ENCODE measurements at regions of chr19 and their contacts with region 1.

Region 1: GRCh38 chr19:18251587-18252369 is 22.5 kb downstream of the IQCN start:
- DNase-seq: peak; percentile 67 to 90 (median 83)
- ATAC-seq: peak; percentile 95
- H3K4me3 ChIP-seq: no peak overlapping the region
- H3K4me3 Mint-ChIP-seq: no peak overlapping the region
- H3K27ac ChIP-seq: no peak overlapping the region
- H3K27ac Mint-ChIP-seq: no peak overlapping the region
- H3K4me1 ChIP-seq: no peaks in the 10 kb centered on the region
- H3K4me1 Mint-ChIP-seq: peaks cover 1% of the 10 kb centered on the region
- H3K27me3 ChIP-seq: peaks cover 0 to 11% of the 10 kb centered on the region in 2 experiments
- H3K27me3 Mint-ChIP-seq: peaks cover 24% of the 10 kb centered on the region
- CTCF ChIP-seq: peak; percentile 83

Region 2: GRCh38 chr19:18007044-18007916 is 244.5 kb before region 1 on chr19:
- CTCF ChIA-PET with region 1: no interaction called
- POLR2A ChIA-PET with region 1: no interaction called
- intact Hi-C with region 1: loop called in 1 of 2 experiments (anchors 2 kb)
- DNase-seq: peak; percentile 66 to 90 (median 80)
- ATAC-seq: peak; percentile 57
- H3K4me3 ChIP-seq: peak overlapping the region; percentile 48 to 61
- H3K4me3 Mint-ChIP-seq: peak overlapping the region; percentile 88
- H3K27ac ChIP-seq: peak overlapping the region; percentile 69 to 72
- H3K27ac Mint-ChIP-seq: peak overlapping the region; percentile 89
- H3K4me1 ChIP-seq: peaks cover 43% of the 10 kb centered on the region
- H3K4me1 Mint-ChIP-seq: peaks cover 40% of the 10 kb centered on the region
- H3K27me3 ChIP-seq: no peaks in the 10 kb centered on the region
- H3K27me3 Mint-ChIP-seq: no peaks in the 10 kb centered on the region
- CTCF ChIP-seq: peak; percentile 97

Region 3: DNA sequence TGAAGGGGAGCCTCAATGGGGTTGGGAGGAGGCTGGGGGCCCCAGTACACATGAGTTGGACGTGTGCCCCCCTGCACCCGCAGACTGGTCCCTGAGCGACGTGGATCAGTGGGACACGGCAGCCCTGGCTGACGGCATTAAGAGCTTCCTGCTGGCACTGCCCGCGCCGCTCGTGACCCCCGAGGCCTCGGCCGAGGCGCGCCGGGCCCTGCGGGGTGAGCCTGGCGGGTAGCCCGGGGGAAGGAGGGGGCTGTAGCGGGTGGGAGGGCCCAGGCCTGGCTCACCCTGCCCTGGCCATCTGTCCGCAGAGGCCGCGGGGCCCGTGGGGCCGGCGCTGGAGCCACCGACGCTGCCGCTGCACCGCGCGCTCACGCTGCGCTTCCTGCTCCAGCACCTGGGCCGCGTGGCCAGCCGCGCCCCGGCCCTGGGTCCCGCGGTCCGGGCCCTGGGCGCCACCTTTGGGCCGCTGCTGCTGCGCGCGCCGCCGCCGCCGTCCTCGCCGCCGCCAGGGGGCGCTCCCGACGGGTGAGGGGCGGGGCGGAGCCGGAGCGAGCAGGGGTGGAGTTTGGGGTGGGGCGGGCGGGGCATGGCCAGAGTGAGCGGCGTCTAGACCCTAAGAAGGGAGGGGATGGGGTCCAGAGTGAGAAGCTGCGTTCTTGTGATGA is 90.7 kb before region 1 on chr19:
- CTCF ChIA-PET with region 1: interaction called, 14 read pairs
- POLR2A ChIA-PET with region 1: no interaction called
- intact Hi-C with region 1: loop called in 1 of 2 experiments (anchors 1 kb)
- DNase-seq: peak; percentile 65 to 93 (median 82)
- ATAC-seq: peak; percentile 99
- H3K4me3 ChIP-seq: peak overlapping the region in 1 of 2 experiments; percentile 19
- H3K4me3 Mint-ChIP-seq: peak overlapping the region; percentile 68
- H3K27ac ChIP-seq: peak overlapping the region in 1 of 2 experiments; percentile 30
- H3K27ac Mint-ChIP-seq: no peak overlapping the region
- H3K4me1 ChIP-seq: peaks cover 14% of the 10 kb centered on the region
- H3K4me1 Mint-ChIP-seq: peaks cover 13% of the 10 kb centered on the region
- H3K27me3 ChIP-seq: no peaks in the 10 kb centered on the region
- H3K27me3 Mint-ChIP-seq: no peaks in the 10 kb centered on the region
- CTCF ChIP-seq: peak; percentile 55

Region 4: GRCh38 chr19:18192673-18193387 is 58.9 kb before region 1 on chr19 and contains the start of gene MPV17L2:
- CTCF ChIA-PET with region 1: interaction called, 68 read pairs
- POLR2A ChIA-PET with region 1: interaction called, 3 read pairs
- intact Hi-C with region 1: loop called (anchors 1 kb)
- DNase-seq: peak; percentile 95 to 100 (median 97)
- ATAC-seq: peak; percentile 84
- H3K4me3 ChIP-seq: peak within 1 kb of the TSS; percentile 73
- H3K4me3 Mint-ChIP-seq: peak within 1 kb of the TSS; percentile 87
- H3K27ac ChIP-seq: peak within 1 kb of the TSS; percentile 64 to 82
- H3K27ac Mint-ChIP-seq: peak within 1 kb of the TSS; percentile 90
- H3K4me1 ChIP-seq: peaks cover 18% of the 10 kb centered on the region
- H3K4me1 Mint-ChIP-seq: peaks cover 22% of the 10 kb centered on the region
- H3K27me3 ChIP-seq: no peaks in the 10 kb centered on the region
- H3K27me3 Mint-ChIP-seq: no peaks in the 10 kb centered on the region
- CTCF ChIP-seq: no peak
- total RNA-seq, gene MPV17L2: 4.0 to 5.2 TPM

Region 5: GRCh38 chr19:18233224-18233825 is 18.5 kb before region 1 on chr19:
- CTCF ChIA-PET with region 1: interaction called, 12 read pairs
- POLR2A ChIA-PET with region 1: no interaction called
- intact Hi-C with region 1: no loop called
- DNase-seq: peak in 7 of 9 experiments; percentile 17 to 70 (median 56)
- ATAC-seq: peak; percentile 90
- H3K4me3 ChIP-seq: no peak overlapping the region
- H3K4me3 Mint-ChIP-seq: no peak overlapping the region
- H3K27ac ChIP-seq: no peak overlapping the region
- H3K27ac Mint-ChIP-seq: no peak overlapping the region
- H3K4me1 ChIP-seq: no peaks in the 10 kb centered on the region
- H3K4me1 Mint-ChIP-seq: no peaks in the 10 kb centered on the region
- H3K27me3 ChIP-seq: peaks cover 34 to 35% of the 10 kb centered on the region in 2 experiments
- H3K27me3 Mint-ChIP-seq: peaks cover 61% of the 10 kb centered on the region
- CTCF ChIP-seq: no peak

Region 6: DNA sequence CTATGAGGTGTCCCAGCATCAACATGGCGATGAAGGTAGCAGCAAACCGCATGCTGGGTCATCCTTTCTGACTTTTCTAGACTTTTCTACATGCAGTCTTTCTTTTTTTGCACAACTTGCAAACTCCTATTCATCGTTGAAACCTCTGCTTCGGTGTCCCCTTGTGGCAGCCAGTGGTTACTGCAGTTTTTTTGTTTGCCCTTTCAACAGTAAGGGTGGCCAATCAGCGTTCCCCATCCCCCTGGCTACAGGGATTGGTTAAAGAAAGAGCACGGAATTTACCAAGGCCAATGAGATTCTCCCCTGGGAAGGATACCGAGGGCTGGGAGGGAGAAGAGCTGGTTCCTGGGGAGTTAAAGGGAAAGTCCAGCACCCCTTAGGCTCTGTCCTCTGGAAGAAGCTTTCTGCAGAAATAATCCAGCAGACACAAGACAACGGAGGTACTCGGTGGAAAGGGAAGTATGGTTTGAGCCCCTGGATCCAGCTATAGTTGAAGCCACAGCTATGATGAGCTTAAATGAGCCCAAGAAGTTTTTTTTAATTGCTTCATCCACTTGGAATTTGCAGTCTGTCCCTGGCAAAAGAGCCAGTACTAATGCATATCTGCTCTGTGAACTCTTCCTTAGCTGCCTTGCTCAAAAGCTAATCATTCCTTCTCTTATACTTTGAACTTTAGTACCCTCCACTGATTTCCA is 76.7 kb after region 1 on chr19:
- CTCF ChIA-PET with region 1: interaction called, 23 read pairs
- POLR2A ChIA-PET with region 1: no interaction called
- intact Hi-C with region 1: loop called in 1 of 2 experiments (anchors 1 kb)
- DNase-seq: peak; percentile 75 to 94 (median 84)
- ATAC-seq: peak; percentile 99
- H3K4me3 ChIP-seq: peak overlapping the region; percentile 17 to 25
- H3K4me3 Mint-ChIP-seq: peak overlapping the region; percentile 62
- H3K27ac ChIP-seq: peak overlapping the region in 1 of 2 experiments; percentile 31
- H3K27ac Mint-ChIP-seq: peak overlapping the region; percentile 2
- H3K4me1 ChIP-seq: peaks cover 14% of the 10 kb centered on the region
- H3K4me1 Mint-ChIP-seq: peaks cover 13% of the 10 kb centered on the region
- H3K27me3 ChIP-seq: no peaks in the 10 kb centered on the region
- H3K27me3 Mint-ChIP-seq: no peaks in the 10 kb centered on the region
- CTCF ChIP-seq: peak; percentile 85

Region 7: DNA sequence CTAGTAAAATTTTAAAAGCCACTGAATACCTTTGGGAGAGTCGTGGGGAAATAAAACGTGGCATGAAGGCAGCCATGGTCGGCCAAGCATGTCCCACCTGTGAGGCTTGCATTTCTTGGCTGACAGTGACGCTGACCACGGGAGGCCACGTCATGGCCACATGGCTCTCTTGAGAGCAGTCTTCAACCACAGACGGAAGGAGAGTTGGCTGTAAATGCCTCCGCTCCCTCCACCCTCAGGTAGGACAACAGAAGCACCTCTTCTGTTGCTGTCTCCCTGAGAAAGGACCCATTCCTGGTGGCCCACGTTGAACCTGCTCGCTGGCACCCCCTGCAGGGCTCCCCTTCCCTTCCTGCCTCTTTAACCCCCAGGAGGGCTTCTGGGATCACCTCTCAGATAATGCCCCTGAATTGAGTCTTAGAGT is 156.3 kb after region 1 on chr19:
- CTCF ChIA-PET with region 1: interaction called, 8 read pairs
- POLR2A ChIA-PET with region 1: no interaction called
- intact Hi-C with region 1: loop called (anchors 2 to 5 kb)
- DNase-seq: peak in 2 of 9 experiments; percentile 33 to 40
- ATAC-seq: no peak
- H3K4me3 ChIP-seq: no peak overlapping the region
- H3K4me3 Mint-ChIP-seq: no peak overlapping the region
- H3K27ac ChIP-seq: no peak overlapping the region
- H3K27ac Mint-ChIP-seq: no peak overlapping the region
- H3K4me1 ChIP-seq: no peaks in the 10 kb centered on the region
- H3K4me1 Mint-ChIP-seq: peaks cover 2% of the 10 kb centered on the region
- H3K27me3 ChIP-seq: no peaks in the 10 kb centered on the region
- H3K27me3 Mint-ChIP-seq: peaks cover 2% of the 10 kb centered on the region
- CTCF ChIP-seq: peak; percentile 20